ENCODE measurements at regions of chr12 and their contacts with region 1.

Region 1: GRCh38 chr12:124321040-124321481 is 26.2 kb downstream of the RFLNA start:
- ATAC-seq: peak; percentile 61 to 87 (median 74)
- H3K4me3 ChIP-seq: no peak overlapping the region
- H3K27ac ChIP-seq: no peak overlapping the region
- H3K4me1 ChIP-seq: peaks cover 13 to 15% of the 10 kb centered on the region in 2 donors

Region 2: GRCh38 chr12:124053851-124054250 is 267.2 kb before region 1 on chr12:
- in situ Hi-C with region 1: loop called in 5 of 9 experiments (anchors 10 to 25 kb)
- ATAC-seq: peak; percentile 78 to 99 (median 85)
- H3K4me3 ChIP-seq: no peak overlapping the region
- H3K27ac ChIP-seq: no peak overlapping the region
- H3K4me1 ChIP-seq: peaks cover 17% of the 10 kb centered on the region in 2 donors

Region 3: DNA sequence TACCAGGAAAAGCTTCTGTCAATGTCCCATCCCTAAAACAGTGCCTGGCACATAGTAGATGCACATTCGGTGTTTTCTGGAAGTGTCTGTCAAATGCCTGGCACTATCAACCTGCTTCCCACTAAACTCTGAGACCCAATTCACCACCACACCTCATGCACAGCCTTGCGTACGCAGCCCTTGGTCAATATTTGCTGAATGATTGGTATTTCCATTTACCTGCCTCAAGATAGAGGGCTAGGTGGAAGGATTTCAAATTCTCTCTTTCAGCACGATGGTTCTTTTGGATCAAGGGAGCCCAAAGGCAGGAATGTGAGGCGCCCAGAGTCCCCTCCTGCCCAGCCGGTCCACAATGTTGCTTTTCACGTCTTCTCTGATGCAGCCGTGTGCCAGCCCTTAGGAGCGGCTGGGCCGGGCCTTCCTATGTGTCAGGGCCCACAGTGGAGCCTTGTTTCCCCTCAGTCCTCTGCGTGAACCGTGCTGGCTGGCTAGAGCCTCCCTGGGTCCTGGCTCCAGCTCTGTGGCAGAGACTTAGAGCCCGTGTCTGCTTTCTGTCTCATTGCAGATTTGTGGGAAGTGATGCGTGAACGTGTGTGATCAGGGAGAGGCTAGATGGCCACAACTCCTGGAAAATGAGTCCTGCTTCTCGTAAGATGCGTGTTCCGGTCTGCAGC is 126.0 kb before region 1 on chr12:
- in situ Hi-C with region 1: no loop called
- ATAC-seq: no peak
- H3K4me3 ChIP-seq: no peak overlapping the region
- H3K27ac ChIP-seq: no peak overlapping the region
- H3K4me1 ChIP-seq: peaks cover 1 to 10% of the 10 kb centered on the region in 2 donors